ENCODE measurements at regions of chr3 and their contacts with region 1.

Region 1: GRCh38 chr3:111859974-111860859 is 1.2 kb downstream of the PHLDB2 start:
- DNase-seq: peak; percentile 88 to 95
- H3K4me3 ChIP-seq: peak overlapping the region; percentile 74
- CTCF ChIP-seq: peak in 1 of 3 donors; percentile 49
- POLR2A ChIP-seq: no peak

Region 2: GRCh38 chr3:111723293-111724215 is 136.7 kb before region 1 on chr3:
- intact Hi-C with region 1: loop called (anchors 5 kb)
- DNase-seq: no peak
- H3K4me3 ChIP-seq: no peak overlapping the region
- CTCF ChIP-seq: no peak
- POLR2A ChIP-seq: no peak

Region 3: GRCh38 chr3:111831840-111832239 is 28.4 kb before region 1 on chr3:
- intact Hi-C with region 1: no loop called
- DNase-seq: no peak
- H3K4me3 ChIP-seq: no peak overlapping the region
- CTCF ChIP-seq: no peak
- POLR2A ChIP-seq: no peak

Region 4: GRCh38 chr3:111967651-111968274 is 107.5 kb after region 1 on chr3:
- intact Hi-C with region 1: loop called (anchors 10 kb)
- DNase-seq: peak; percentile 88 to 96
- H3K4me3 ChIP-seq: no peak overlapping the region
- CTCF ChIP-seq: peak in 1 of 3 donors; percentile 91
- POLR2A ChIP-seq: no peak

Region 5: DNA sequence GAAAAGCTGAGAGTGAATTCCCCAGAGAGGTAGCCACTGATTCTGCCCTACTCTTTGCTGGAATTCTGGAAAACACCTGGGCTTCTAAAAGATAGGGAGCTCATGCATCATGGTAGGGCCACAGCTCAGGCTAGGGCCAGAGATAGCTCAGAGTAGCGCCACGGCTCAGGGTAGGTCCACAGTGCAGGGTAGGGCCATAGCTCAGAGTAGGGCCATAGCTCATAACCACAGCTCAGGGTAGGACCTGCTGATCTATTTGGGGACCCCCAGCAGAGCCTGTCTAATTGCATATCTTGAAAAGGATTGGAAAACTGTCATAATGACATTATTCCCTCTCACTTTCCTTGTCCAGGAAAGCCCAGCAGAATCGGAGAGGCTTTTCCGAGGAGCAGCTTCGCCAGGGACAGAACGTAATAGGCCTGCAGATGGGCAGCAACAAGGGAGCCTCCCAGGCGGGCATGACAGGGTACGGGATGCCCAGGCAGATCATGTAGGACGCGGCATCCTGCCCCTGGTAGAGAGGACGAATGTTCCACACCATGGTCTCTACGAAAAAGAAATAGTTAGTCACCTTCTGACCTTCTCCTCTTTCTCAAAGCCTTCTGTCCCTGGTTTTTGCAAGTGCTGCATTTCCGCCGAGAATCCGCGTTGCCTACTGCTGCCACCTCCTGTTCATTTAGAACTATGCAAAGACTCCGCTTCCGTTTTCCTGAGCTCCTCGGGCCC is 153.0 kb after region 1 on chr3:
- intact Hi-C with region 1: no loop called
- DNase-seq: peak; percentile 44 to 91
- H3K4me3 ChIP-seq: no peak overlapping the region
- CTCF ChIP-seq: no peak
- POLR2A ChIP-seq: no peak

Measured in lower leg skin (tissue), 4 donors.